Panc1 (cell line): ENCODE measurements at regions of chr19 and their contacts with region 1.

Region 1: GRCh38 chr19:40090241-40091204 is at the start of gene ZNF780A:
- DNase-seq: peak; percentile 100
- ATAC-seq: peak; percentile 99
- H3K4me3 ChIP-seq: peak within 1 kb of the TSS; percentile 36 to 48
- H3K27ac ChIP-seq: peak within 1 kb of the TSS; percentile 83
- H3K4me1 ChIP-seq: peaks cover 15% of the 10 kb centered on the region
- H3K27me3 ChIP-seq: no peaks in the 10 kb centered on the region; the same call in 1 of the 2 replicates
- CTCF ChIP-seq: no peak
- total RNA-seq, gene ZNF780A: 251 TPM

Region 2: DNA sequence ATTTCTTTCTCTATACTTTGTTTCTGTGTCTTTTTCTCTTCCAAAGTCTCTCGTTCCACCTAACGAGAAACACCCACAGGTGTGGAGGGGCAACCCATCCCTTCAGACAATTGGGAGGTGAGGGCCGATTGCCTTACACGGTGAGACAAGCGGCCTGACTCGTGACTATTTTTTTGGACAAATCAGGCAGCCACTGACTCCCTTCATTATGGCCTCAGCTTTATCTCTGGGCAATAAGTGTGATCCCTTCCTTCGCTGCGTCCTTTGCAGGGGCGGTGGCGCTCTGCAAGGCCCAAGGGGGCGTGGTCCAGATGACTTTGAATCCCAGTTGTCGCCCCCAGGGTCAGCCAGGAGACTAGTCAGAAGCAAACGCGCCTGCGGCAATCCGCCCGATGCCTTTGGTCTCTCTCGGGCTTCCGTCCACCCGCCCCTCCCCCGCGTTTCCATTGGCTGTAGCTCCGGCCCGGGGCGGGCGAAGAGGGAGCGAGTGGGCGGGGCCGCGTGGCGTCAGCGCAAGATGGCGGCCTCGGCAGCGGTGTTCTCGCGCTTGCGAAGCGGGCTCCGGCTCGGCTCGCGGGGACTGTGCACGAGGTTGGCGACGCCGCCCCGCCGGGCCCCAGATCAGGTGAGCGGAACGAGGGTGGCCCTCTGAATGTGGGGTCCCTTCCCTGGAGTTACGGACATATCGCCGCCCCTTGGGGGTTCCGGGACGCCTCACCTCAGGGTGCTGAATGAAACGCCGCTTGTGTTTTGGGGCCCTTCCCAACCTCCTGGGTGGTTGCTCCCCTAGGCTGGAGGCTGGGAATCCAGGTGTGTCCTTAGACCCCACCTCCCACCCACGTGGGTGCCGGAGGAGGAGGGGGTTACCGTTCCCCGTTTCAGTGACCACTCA is 609.9 kb before region 1 on chr19 and contains the start of gene TIMM50:
- CTCF ChIA-PET with region 1: no interaction called
- POLR2A ChIA-PET with region 1: interaction called, 12 read pairs
- in situ Hi-C with region 1: no loop called
- intact Hi-C with region 1: no loop called
- DNase-seq: peak; percentile 100
- ATAC-seq: peak; percentile 96
- H3K4me3 ChIP-seq: peak within 1 kb of the TSS; percentile 39 to 55
- H3K27ac ChIP-seq: peak within 1 kb of the TSS; percentile 86
- H3K4me1 ChIP-seq: peaks cover 23% of the 10 kb centered on the region
- H3K27me3 ChIP-seq: no peaks in the 10 kb centered on the region
- CTCF ChIP-seq: no peak
- total RNA-seq, gene TIMM50: 1,837 TPM

Region 3: GRCh38 chr19:39983695-39984305 is 106.7 kb before region 1 on chr19:
- CTCF ChIA-PET with region 1: no interaction called
- POLR2A ChIA-PET with region 1: interaction called, 10 read pairs
- in situ Hi-C with region 1: no loop called
- intact Hi-C with region 1: no loop called
- DNase-seq: no peak
- ATAC-seq: peak; percentile 20
- H3K4me3 ChIP-seq: no peak overlapping the region
- H3K27ac ChIP-seq: no peak overlapping the region
- H3K4me1 ChIP-seq: no peaks in the 10 kb centered on the region
- H3K27me3 ChIP-seq: no peaks in the 10 kb centered on the region
- CTCF ChIP-seq: no peak

Region 4: GRCh38 chr19:40055832-40056504 is 34.6 kb before region 1 on chr19 and contains the start of gene ZNF780B:
- CTCF ChIA-PET with region 1: interaction called, 7 read pairs
- POLR2A ChIA-PET with region 1: interaction called, 5 read pairs
- in situ Hi-C with region 1: loop called (anchors 5 kb)
- intact Hi-C with region 1: no loop called
- DNase-seq: peak; percentile 100
- ATAC-seq: peak; percentile 99
- H3K4me3 ChIP-seq: peak within 1 kb of the TSS; percentile 36 to 50
- H3K27ac ChIP-seq: peak within 1 kb of the TSS; percentile 78
- H3K4me1 ChIP-seq: peaks cover 16% of the 10 kb centered on the region
- H3K27me3 ChIP-seq: no peaks in the 10 kb centered on the region
- CTCF ChIP-seq: no peak
- total RNA-seq, gene ZNF780B: 237 TPM

Region 5: GRCh38 chr19:40174092-40174491 is 83.6 kb after region 1 on chr19:
- CTCF ChIA-PET with region 1: no interaction called
- POLR2A ChIA-PET with region 1: interaction called, 20 read pairs
- in situ Hi-C with region 1: no loop called
- intact Hi-C with region 1: no loop called
- DNase-seq: no peak
- ATAC-seq: no peak
- H3K4me3 ChIP-seq: no peak overlapping the region
- H3K27ac ChIP-seq: no peak overlapping the region
- H3K4me1 ChIP-seq: no peaks in the 10 kb centered on the region
- H3K27me3 ChIP-seq: 0 out of 2 replicates have a peak, but pooled peaks cover 2% of the 10 kb centered on the region
- CTCF ChIP-seq: no peak

Region 6: GRCh38 chr19:40200341-40201099 is 110.0 kb after region 1 on chr19:
- CTCF ChIA-PET with region 1: no interaction called
- POLR2A ChIA-PET with region 1: interaction called, 15 read pairs
- in situ Hi-C with region 1: no loop called
- intact Hi-C with region 1: no loop called
- DNase-seq: no peak
- ATAC-seq: peak; percentile 7; the same call in 1 of the 2 replicates
- H3K4me3 ChIP-seq: no peak overlapping the region
- H3K27ac ChIP-seq: no peak overlapping the region
- H3K4me1 ChIP-seq: no peaks in the 10 kb centered on the region
- H3K27me3 ChIP-seq: no peaks in the 10 kb centered on the region
- CTCF ChIP-seq: no peak